PC-9 (cell line): ENCODE measurements at regions of chr19 and their contacts with region 1.

Region 1: DNA sequence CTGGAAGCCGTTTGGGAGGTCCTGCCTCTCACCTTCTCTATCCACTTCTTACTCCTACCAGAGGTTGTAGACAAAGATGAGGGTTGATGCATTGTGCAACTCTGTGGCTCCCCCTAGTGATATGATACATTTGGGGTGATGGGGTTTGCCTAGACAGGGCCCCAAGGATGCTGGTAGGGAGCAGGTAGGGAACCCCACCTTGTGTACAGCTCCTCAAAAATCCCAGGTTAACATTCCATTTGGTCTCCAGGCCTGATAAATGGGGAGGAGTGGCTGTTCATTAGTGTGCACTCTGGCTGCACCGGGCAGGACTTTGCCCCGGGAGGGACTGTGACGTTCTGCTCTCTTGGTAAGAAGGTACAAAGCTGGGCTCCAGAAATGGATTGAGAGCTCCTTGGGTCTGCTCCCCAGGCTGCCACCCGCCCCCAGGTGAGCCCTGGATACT is 19.2 kb downstream of the SIGLEC8 start:
- DNase-seq: no peak
- H3K4me3 ChIP-seq: no peak overlapping the region
- H3K27ac ChIP-seq: no peak overlapping the region
- H3K4me1 ChIP-seq: no peaks in the 10 kb centered on the region
- H3K27me3 ChIP-seq: peaks cover 91% of the 10 kb centered on the region
- CTCF ChIP-seq: peak; percentile 36; the same call in 1 of the 2 replicates

Region 2: GRCh38 chr19:51393959-51394836 is 44.8 kb before region 1 on chr19:
- CTCF ChIA-PET with region 1: no interaction called
- POLR2A ChIA-PET with region 1: no interaction called
- intact Hi-C with region 1: loop called (anchors 2 kb)
- DNase-seq: peak; percentile 94 to 99
- H3K4me3 ChIP-seq: peak overlapping the region; percentile 62
- H3K27ac ChIP-seq: no peak overlapping the region
- H3K4me1 ChIP-seq: peaks cover 10% of the 10 kb centered on the region
- H3K27me3 ChIP-seq: no peaks in the 10 kb centered on the region
- CTCF ChIP-seq: no peak